Breast epithelium (tissue), 4 donors: ENCODE measurements at regions of chr17 and their contacts with region 1.

Region 1: DNA sequence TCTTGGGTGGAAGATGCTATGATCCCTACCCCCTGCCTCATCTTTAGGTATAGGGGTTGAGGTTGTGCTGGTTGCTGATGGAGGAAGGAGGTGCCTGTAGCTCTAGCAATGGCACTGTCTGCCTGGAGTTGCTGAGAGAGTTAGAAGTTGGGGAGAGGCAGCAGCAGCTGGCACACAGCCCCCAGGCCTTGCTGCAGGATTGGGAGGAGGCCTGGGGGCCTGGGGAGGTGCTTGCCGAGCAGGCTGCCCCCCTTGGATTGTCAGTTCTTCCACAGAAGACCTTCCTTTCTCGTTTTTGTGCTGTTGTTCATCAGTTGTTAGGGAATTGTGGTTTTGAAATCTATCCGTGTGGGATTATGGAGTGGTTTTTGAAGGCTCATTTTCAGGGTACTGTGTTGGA is 52.9 kb downstream of the SEC14L1 start:
- DNase-seq: no peak
- H3K4me3 ChIP-seq: no peak overlapping the region
- H3K27ac ChIP-seq: no peak overlapping the region
- H3K4me1 ChIP-seq: no peaks in the 10 kb centered on the region
- H3K27me3 ChIP-seq: no peaks in the 10 kb centered on the region
- CTCF ChIP-seq: no peak
- POLR2A ChIP-seq: no peak

Region 2: GRCh38 chr17:77208217-77208808 is 14.7 kb after region 1 on chr17:
- intact Hi-C with region 1: loop called (anchors 1 kb)
- DNase-seq: no peak
- H3K4me3 ChIP-seq: no peak overlapping the region
- H3K27ac ChIP-seq: no peak overlapping the region
- H3K4me1 ChIP-seq: no peaks in the 10 kb centered on the region
- H3K27me3 ChIP-seq: no peaks in the 10 kb centered on the region
- CTCF ChIP-seq: peak in 1 of 3 donors; percentile 38
- POLR2A ChIP-seq: no peak